ENCODE measurements at regions of chr7 and their contacts with region 1.

Region 1: DNA sequence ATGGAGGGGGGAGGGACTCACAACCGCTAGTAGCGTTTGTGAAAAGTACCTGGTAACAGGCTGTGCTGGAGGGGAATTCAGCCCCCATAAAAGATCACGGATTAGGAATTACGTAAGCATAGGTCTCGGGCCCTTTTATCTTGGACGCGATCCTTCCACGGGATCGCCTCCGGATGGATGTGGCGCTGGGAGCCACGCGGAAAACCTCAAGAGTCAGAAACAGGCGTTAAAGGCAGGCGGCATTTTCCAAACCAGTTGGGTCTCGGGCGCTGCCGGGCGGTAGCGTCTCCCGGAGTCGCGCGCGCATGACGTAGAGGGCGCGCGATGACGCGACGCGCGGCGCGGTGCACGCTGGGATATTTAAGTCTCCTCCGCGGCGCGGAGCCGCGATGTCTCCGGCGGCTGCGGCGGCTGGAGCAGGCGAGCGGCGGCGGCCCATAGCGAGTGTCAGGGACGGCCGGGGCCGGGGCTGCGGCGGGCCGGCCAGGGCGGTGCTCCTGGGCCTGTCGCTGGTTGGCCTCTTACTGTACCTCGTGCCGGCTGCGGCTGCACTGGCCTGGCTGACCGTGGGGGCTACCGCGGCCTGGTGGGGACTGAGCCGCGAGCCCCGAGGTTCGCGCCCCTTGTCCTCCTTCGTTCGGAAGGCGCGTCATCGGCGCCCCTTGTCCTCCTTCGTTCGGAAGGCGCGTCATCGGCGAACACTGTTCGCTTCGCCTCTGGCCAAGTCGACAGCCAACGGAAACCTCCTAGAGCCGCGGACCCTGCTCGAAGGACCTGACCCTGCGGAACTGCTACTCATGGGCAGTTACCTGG is at the start of gene POM121:
- DNase-seq: peak; percentile 90
- ATAC-seq: peak; percentile 87
- H3K4me3 Mint-ChIP-seq: peak within 1 kb of the TSS; percentile 88
- H3K27ac Mint-ChIP-seq: peak within 1 kb of the TSS; percentile 97
- H3K4me1 Mint-ChIP-seq: peaks cover 24% of the 10 kb centered on the region
- H3K27me3 Mint-ChIP-seq: no peaks in the 10 kb centered on the region
- total RNA-seq, gene POM121: 62.2 to 67.4 TPM

Region 2: DNA sequence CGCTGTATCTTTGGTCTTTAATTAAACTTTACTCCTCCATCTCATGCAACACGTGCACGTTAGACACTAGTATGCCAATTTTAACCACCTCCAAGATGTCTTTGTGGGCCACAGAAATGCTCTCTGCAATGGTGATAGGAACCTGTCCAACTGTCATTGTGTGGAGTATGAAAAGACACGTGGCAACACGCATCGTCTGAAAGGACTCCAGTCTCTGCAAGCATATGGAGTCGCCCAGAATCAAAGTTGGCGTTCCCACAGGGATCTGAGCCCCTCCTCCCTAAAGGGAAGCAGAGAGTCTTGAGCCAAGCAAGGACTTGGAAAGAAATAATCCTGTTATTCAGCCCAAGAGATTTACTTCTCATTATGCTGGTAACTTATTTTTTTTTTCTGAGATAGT is 813.9 kb before region 1 on chr7:
- CTCF ChIA-PET with region 1: no interaction called
- POLR2A ChIA-PET with region 1: no interaction called
- intact Hi-C with region 1: no loop called
- DNase-seq: no peak
- ATAC-seq: no peak
- H3K4me3 Mint-ChIP-seq: no peak overlapping the region
- H3K27ac Mint-ChIP-seq: no peak overlapping the region
- H3K4me1 Mint-ChIP-seq: no peaks in the 10 kb centered on the region
- H3K27me3 Mint-ChIP-seq: no peaks in the 10 kb centered on the region

Region 3: GRCh38 chr7:72405413-72405812 is 519.5 kb before region 1 on chr7:
- CTCF ChIA-PET with region 1: no interaction called
- POLR2A ChIA-PET with region 1: no interaction called
- intact Hi-C with region 1: no loop called
- DNase-seq: peak; percentile 51
- ATAC-seq: peak; percentile 66
- H3K4me3 Mint-ChIP-seq: no peak overlapping the region
- H3K27ac Mint-ChIP-seq: no peak overlapping the region
- H3K4me1 Mint-ChIP-seq: peaks cover 4% of the 10 kb centered on the region
- H3K27me3 Mint-ChIP-seq: peaks cover 2% of the 10 kb centered on the region

Region 4: DNA sequence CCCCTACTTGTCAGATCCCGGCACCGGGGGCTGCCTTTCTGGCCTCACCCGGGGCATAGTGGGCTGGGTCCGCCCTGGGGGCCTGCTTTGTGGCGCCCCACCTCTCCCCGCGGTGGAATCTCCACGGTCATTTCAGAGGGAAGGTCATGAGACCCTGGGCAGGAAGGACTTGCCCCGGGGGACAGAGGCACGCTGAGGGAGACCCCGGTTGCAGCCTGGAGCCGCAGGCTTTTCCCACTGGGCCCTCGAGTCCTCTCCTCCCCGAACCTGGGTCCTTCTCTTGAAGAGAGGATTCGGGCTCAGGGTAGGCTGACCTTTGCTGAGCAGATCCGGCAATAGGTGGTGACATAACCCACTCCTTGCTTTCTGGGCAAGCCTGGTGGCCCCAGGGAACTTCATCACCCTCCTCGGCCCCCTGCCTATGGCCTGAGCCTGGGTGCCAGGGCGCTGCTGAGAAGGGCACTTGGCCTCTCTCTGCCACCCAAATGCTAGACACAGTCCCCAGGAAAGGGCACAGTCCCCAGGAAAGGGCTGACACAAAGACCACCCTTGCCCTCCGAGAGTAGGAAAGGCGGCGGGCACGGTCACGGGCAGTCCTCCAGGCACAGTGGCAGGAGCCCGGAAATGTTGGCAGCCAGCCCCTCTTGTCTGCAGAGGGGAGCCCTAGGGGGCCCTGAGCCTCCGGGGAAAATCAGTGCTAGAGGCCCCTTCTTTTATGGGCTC is 439.2 kb after region 1 on chr7:
- CTCF ChIA-PET with region 1: no interaction called
- POLR2A ChIA-PET with region 1: no interaction called
- intact Hi-C with region 1: no loop called
- DNase-seq: no peak
- ATAC-seq: no peak
- H3K4me3 Mint-ChIP-seq: no peak overlapping the region
- H3K27ac Mint-ChIP-seq: no peak overlapping the region
- H3K4me1 Mint-ChIP-seq: no peaks in the 10 kb centered on the region
- H3K27me3 Mint-ChIP-seq: peaks cover 3% of the 10 kb centered on the region

Region 5: GRCh38 chr7:73557108-73557396 is 632.1 kb after region 1 on chr7:
- CTCF ChIA-PET with region 1: no interaction called
- POLR2A ChIA-PET with region 1: no interaction called
- intact Hi-C with region 1: loop called in 1 of 2 experiments (anchors 2 kb)
- DNase-seq: peak; percentile 95
- ATAC-seq: peak; percentile 92
- H3K4me3 Mint-ChIP-seq: peak overlapping the region; percentile 93
- H3K27ac Mint-ChIP-seq: peak overlapping the region; percentile 91
- H3K4me1 Mint-ChIP-seq: peaks cover 35% of the 10 kb centered on the region
- H3K27me3 Mint-ChIP-seq: no peaks in the 10 kb centered on the region

Region 6: DNA sequence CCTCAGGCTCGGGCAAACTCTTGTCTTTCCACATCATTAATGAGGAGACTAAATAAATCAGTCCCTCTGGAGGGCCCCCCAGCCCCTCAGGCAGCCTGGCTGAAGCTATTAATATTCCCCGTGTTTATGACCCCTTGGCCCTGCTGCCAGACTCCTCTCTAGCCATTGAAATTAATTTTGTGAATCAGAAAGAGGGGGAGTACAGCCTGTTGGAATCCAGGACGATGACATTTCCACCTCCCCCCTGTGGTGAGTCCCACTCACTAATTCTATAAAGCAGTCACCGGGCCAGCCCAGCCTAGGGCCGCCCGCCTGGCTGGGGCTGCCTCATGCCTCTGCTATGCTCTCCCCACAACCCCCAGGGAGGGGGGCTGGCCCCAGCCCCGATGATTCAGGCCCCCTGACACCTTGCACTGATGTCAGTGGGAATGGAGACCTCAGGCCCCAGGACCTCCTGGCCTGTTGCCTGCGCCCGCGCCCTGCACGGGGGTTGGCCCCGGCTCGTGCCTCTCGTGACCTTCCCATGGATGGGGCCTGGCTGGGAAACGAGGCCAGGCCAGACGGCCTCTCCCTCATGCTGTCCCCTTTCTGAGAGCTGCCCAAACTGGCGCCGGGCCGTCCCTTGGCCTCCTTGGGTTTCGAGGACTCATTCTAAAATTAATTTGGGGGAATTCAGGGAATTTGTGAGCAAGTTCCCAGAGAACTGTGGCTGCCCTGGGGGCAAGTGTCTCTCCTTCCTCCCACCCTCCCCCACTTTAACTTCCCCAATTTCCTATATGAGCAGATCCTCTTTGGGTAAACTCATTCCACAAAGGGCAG is 970.0 kb after region 1 on chr7:
- CTCF ChIA-PET with region 1: no interaction called
- POLR2A ChIA-PET with region 1: no interaction called
- intact Hi-C with region 1: no loop called
- DNase-seq: no peak
- ATAC-seq: no peak
- H3K4me3 Mint-ChIP-seq: no peak overlapping the region
- H3K27ac Mint-ChIP-seq: no peak overlapping the region
- H3K4me1 Mint-ChIP-seq: peaks cover 5% of the 10 kb centered on the region
- H3K27me3 Mint-ChIP-seq: no peaks in the 10 kb centered on the region